ENCODE measurements at regions of chr4 and their contacts with region 1.

Region 1: DNA sequence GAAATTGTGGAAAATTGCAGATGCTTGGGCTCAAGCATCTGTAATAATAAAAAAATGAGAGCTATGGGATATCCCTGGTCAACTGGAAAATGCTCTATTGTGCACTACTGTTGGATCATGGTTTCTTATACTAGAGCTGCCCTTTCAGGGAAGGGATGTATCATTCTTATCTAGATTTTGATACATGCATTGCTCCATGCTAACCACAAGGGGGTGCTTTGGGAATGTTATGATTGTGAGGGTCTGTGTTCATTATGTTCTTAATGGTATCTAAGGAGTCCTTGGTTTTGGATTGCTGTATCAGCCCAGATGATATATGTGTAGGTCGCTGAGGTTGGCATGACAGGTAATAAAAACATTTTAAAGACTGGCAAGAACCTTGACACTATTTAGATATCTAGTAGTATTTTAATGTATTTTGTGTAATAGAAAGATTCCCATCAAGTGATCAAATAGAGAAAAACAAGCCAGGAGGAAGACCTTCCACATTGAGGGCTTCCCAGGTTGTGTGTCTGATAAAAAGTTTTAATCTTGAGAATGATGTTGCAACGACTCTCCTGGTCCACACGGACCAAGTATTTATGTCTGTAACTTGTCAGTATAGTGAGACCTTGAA is 49.2 kb upstream of the TLR2 start:
- DNase-seq: no peak

Region 2: GRCh38 chr4:153564630-153565525 is 70.0 kb before region 1 on chr4:
- intact Hi-C with region 1: no loop called
- DNase-seq: peak in 24 of 42 donors; percentile 15 to 80 (median 46)

Region 3: GRCh38 chr4:153750197-153750817 is 115.5 kb after region 1 on chr4:
- intact Hi-C with region 1: loop called (anchors 10 kb)
- DNase-seq: peak in 41 of 42 donors; percentile 41 to 86 (median 72)

Region 4: GRCh38 chr4:153785910-153786721 is 151.3 kb after region 1 on chr4:
- intact Hi-C with region 1: no loop called
- DNase-seq: no peak

Region 5: GRCh38 chr4:153890761-153891160 is 255.9 kb after region 1 on chr4:
- intact Hi-C with region 1: no loop called
- DNase-seq: no peak